Body of pancreas (tissue), 4 donors: ENCODE measurements at regions of chr1 and their contacts with region 1.

Region 1: DNA sequence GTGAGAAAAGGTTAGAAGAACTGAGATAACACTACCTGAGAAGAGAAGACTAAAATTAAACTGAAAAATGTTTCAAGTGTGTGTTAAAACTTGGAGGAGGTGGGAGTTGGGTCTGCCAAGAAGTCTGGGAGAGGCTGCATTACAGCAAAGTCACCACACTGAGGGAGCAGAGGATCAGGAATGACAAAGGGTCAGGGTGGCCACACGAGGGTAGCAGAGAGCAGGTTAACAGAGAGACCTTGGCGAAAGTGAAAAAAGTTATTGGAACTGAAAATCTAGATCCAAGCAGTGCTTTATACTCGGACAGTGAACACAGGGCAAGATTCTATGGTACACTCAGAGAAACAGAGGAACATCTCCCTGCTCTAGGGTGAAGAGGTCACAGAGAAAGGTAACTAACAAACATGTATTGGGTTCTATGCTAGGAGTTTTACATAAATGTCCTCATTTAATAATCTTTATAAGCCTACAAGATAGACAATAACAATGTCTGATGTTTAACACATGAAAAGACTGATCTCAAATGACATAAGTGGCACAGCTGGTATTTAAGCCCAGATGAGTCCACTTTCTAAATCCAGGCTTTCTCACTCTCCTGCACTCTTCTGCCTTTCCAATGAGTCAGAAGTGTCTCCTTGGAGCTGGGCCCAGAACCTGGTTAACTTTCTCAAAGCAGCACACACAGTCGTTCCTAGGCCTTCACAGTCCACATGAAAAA is 10.3 kb upstream of the CADM3 start:
- DNase-seq: peak; percentile 76 to 82 (median 79)
- ATAC-seq: peak; percentile 100
- H3K4me3 ChIP-seq: no peak overlapping the region
- H3K27ac ChIP-seq: no peak overlapping the region
- H3K4me1 ChIP-seq: peaks cover 6% of the 10 kb centered on the region
- H3K27me3 ChIP-seq: no peaks in the 10 kb centered on the region
- CTCF ChIP-seq: peak; percentile 87 to 100 (median 99)
- POLR2A ChIP-seq: no peak

Region 2: DNA sequence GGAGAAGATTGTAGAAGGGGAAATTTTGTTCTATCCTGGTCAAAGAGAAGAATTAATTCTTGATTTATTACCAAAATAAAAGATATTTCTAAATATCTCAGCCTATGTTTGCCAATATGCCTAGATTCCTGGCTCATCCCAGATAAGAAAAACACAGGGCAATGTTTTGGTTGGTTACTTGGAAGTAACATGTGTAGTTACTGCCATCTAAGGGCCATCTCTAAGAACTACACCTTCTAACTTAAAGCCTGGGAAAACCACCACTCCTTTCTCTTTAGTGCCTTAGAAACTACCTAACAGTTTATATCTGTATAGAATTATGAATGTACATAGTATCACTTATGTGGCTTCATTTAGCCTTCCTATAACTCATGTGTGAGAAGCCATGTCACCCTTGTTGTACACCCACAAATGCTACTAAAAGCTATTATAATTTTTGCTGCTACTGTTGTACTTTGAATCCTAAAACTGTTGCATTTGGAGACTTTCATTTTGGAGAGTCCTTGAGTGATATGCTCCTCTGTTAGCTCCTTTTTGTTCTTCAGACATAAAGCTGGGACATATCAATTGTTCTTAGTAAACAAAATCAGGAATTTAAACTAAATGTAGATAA is 89.1 kb before region 1 on chr1:
- intact Hi-C with region 1: no loop called
- DNase-seq: no peak
- ATAC-seq: peak; percentile 69
- H3K4me3 ChIP-seq: no peak overlapping the region
- H3K27ac ChIP-seq: no peak overlapping the region
- H3K4me1 ChIP-seq: no peaks in the 10 kb centered on the region
- H3K27me3 ChIP-seq: no peaks in the 10 kb centered on the region
- CTCF ChIP-seq: peak; percentile 7 to 75 (median 57)
- POLR2A ChIP-seq: no peak

Region 3: GRCh38 chr1:159197561-159198557 is 36.7 kb after region 1 on chr1:
- intact Hi-C with region 1: loop called (anchors 5 kb)
- DNase-seq: peak; percentile 76 to 82 (median 78)
- ATAC-seq: peak; percentile 77
- H3K4me3 ChIP-seq: no peak overlapping the region
- H3K27ac ChIP-seq: no peak overlapping the region
- H3K4me1 ChIP-seq: no peaks in the 10 kb centered on the region
- H3K27me3 ChIP-seq: no peaks in the 10 kb centered on the region
- CTCF ChIP-seq: peak; percentile 67 to 92 (median 85)
- POLR2A ChIP-seq: no peak

Region 4: DNA sequence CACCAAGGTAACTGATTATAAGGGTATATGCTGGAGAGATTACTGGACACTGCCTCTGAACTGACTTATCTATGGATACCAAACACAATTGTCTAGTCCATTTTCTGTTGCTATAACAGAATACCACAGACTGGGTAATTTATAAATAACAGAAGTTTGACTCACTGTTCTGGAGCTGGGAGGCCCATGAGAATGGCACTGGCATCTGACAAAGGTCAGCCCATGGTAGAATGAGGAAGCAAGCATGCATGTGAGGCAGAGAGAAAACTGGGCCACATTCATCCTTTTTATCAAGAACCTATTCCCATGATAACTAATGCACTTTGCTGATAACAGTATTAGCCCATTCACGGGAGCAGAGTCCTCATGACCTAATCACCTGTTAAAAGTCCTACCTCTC is 178.4 kb after region 1 on chr1:
- intact Hi-C with region 1: no loop called
- DNase-seq: no peak
- ATAC-seq: no peak
- H3K4me3 ChIP-seq: no peak overlapping the region
- H3K27ac ChIP-seq: no peak overlapping the region
- H3K4me1 ChIP-seq: no peaks in the 10 kb centered on the region
- H3K27me3 ChIP-seq: no peaks in the 10 kb centered on the region
- CTCF ChIP-seq: no peak
- POLR2A ChIP-seq: no peak

Region 5: GRCh38 chr1:159554261-159554660 is 393.1 kb after region 1 on chr1:
- intact Hi-C with region 1: no loop called
- DNase-seq: no peak
- ATAC-seq: no peak
- H3K4me3 ChIP-seq: no peak overlapping the region
- H3K27ac ChIP-seq: no peak overlapping the region
- H3K4me1 ChIP-seq: no peaks in the 10 kb centered on the region
- H3K27me3 ChIP-seq: no peaks in the 10 kb centered on the region
- CTCF ChIP-seq: no peak
- POLR2A ChIP-seq: no peak